IMR-90 (cell line): ENCODE measurements at regions of chr14 and their contacts with region 1.

Region 1: DNA sequence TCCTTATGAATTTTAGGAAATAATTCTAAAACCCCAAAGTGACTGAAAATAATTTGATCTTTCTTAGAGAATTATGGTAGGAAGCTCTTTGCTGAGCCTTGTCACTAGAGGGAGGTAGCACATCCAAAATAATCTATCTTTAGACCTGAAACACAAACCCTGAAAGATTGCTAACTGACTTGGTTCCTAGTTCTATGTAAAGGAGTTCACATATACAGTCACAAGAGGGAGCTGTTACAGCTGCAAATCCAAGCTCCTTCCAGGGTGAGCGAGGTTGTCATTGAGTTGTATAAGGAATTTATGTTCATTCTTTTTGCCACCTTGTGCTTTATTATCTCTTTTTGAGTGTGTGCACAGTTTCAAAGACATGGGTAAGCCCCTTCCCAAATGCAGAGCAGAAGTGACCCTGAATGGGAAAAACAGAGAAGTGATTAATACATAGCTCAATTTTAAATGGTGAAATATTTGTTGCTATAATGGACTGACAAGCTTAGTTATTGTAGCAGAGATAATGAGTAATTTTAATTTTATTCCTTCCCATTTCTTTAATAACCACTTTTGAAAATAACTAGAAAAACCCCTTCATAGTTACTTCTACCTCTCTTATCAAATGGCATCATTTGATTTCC is 387.9 kb downstream of the DAD1 start:
- DNase-seq: peak; percentile 82
- ATAC-seq: peak; percentile 98
- H3K4me3 ChIP-seq: no peak overlapping the region
- H3K27ac ChIP-seq: no peak overlapping the region
- H3K4me1 ChIP-seq: 0 out of 2 replicates have a peak, but pooled peaks cover 1% of the 10 kb centered on the region
- H3K27me3 ChIP-seq: no peaks in the 10 kb centered on the region
- CTCF ChIP-seq: peak; percentile 79
- POLR2A ChIP-seq: no peak
- RAD21 ChIP-seq: peak; percentile 72

Region 2: GRCh38 chr14:22099942-22100763 is 100.9 kb before region 1 on chr14:
- CTCF ChIA-PET with region 1: no interaction called
- POLR2A ChIA-PET with region 1: no interaction called
- dilution Hi-C with region 1: no loop called
- in situ Hi-C with region 1: no loop called
- intact Hi-C with region 1: no loop called
- DNase-seq: peak; percentile 36
- ATAC-seq: peak; percentile 80
- H3K4me3 ChIP-seq: no peak overlapping the region
- H3K27ac ChIP-seq: no peak overlapping the region
- H3K4me1 ChIP-seq: no peaks in the 10 kb centered on the region
- H3K27me3 ChIP-seq: peaks cover 8% of the 10 kb centered on the region
- CTCF ChIP-seq: peak; percentile 52
- POLR2A ChIP-seq: no peak
- RAD21 ChIP-seq: peak; percentile 19; the same call in 1 of the 2 replicates

Region 3: DNA sequence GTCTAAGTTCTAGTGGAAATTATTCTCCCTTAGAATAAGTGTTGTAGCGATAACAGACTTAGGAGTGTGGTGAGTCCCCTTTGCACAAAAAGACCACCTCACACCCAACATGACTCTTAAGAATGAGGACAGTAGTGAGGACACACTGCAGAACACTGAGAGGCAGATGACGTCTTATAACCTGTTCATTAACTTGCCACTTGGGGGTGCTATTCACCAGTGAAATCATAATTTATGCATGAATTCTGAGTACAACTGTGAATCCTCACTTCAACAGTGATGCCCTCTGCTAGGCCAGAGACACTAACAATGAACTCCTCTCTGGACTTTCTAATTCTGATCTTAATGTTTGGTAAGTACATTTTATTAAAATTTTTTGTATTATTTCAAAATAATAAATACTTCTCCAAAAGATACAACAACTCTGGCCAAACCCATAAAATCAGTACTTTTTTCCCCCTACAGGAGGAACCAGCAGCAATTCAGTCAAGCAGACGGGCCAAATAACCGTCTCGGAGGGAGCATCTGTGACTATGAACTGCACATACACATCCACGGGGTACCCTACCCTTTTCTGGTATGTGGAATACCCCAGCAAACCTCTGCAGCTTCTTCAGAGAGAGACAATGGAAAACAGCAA is 113.2 kb after region 1 on chr14:
- CTCF ChIA-PET with region 1: interaction called, 4 read pairs
- POLR2A ChIA-PET with region 1: no interaction called
- dilution Hi-C with region 1: no loop called
- in situ Hi-C with region 1: no loop called
- intact Hi-C with region 1: loop called (anchors 5 kb)
- DNase-seq: peak; percentile 62
- ATAC-seq: peak; percentile 93
- H3K4me3 ChIP-seq: no peak overlapping the region
- H3K27ac ChIP-seq: no peak overlapping the region
- H3K4me1 ChIP-seq: no peaks in the 10 kb centered on the region
- H3K27me3 ChIP-seq: peaks cover 2% of the 10 kb centered on the region; the same call in 1 of the 2 replicates
- CTCF ChIP-seq: peak; percentile 65
- POLR2A ChIP-seq: no peak
- RAD21 ChIP-seq: peak; percentile 50